ENCODE measurements at regions of chr9 and their contacts with region 1.

Region 1: DNA sequence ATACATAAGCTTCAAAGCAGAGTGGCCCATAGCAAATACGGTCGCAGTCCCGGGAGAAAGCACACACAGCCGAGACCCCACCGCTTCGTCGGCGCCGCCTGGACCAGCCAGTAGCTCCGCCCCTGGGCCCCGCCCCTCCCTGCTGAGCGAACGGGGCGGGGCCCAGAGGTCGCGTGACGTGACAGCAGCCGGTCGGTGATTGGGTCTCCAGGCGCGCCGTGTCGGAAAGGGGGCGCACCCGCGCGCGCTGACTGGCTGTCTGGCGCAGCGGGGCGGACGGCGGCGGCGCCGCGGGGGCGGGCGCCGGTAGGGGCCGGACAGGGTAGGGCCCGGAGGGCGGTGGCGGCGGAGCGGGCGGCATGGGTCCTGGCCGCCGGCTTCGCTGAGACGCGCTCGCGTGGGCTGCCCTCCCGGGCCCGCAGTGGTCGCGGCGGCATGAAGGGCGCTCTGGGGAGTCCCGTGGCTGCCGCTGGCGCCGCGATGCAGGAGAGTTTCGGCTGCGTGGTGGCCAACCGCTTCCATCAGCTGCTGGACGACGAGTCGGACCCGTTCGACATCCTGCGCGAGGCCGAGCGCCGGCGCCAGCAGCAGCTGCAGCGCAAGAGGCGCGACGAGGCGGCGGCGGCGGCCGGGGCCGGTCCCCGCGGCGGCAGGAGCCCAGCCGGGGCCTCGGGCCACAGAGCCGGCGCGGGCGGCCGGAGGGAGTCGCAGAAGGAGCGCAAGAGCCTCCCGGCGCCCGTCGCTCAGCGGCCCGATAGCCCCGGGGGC is at the start of gene HABP4:
- ATAC-seq: peak; percentile 96 to 98 (median 96)
- H3K4me3 ChIP-seq: peak within 1 kb of the TSS; percentile 49 to 70 (median 63)
- H3K27ac ChIP-seq: peak within 1 kb of the TSS; percentile 46 to 55
- H3K4me1 ChIP-seq: peaks cover 14 to 20% of the 10 kb centered on the region in 2 donors
- total RNA-seq, gene HABP4: 4.0 to 30.2 (median 24.0) TPM

Region 2: GRCh38 chr9:96532173-96532572 is 82.1 kb after region 1 on chr9:
- in situ Hi-C with region 1: no loop called
- ATAC-seq: no peak
- H3K4me3 ChIP-seq: no peak overlapping the region
- H3K27ac ChIP-seq: no peak overlapping the region
- H3K4me1 ChIP-seq: no peaks in the 10 kb centered on the region

Region 3: GRCh38 chr9:96599298-96599697 is 149.3 kb after region 1 on chr9:
- in situ Hi-C with region 1: loop called in 2 of 9 experiments (anchors 25 kb)
- ATAC-seq: no peak
- H3K4me3 ChIP-seq: no peak overlapping the region
- H3K27ac ChIP-seq: no peak overlapping the region
- H3K4me1 ChIP-seq: peaks cover 0 to 3% of the 10 kb centered on the region in 2 donors

Region 4: GRCh38 chr9:96619491-96620154 is 169.6 kb after region 1 on chr9 and contains the start of gene CDC14B:
- in situ Hi-C with region 1: loop called in 1 of 9 experiments (anchors 25 kb)
- ATAC-seq: peak; percentile 82 to 94 (median 88)
- H3K4me3 ChIP-seq: peak within 1 kb of the TSS; percentile 64 to 99 (median 92)
- H3K27ac ChIP-seq: peak within 1 kb of the TSS; percentile 45 to 66
- H3K4me1 ChIP-seq: peaks cover 19 to 22% of the 10 kb centered on the region in 2 donors
- total RNA-seq, gene CDC14B: 1.9 to 28.0 (median 14.5) TPM

Region 5: DNA sequence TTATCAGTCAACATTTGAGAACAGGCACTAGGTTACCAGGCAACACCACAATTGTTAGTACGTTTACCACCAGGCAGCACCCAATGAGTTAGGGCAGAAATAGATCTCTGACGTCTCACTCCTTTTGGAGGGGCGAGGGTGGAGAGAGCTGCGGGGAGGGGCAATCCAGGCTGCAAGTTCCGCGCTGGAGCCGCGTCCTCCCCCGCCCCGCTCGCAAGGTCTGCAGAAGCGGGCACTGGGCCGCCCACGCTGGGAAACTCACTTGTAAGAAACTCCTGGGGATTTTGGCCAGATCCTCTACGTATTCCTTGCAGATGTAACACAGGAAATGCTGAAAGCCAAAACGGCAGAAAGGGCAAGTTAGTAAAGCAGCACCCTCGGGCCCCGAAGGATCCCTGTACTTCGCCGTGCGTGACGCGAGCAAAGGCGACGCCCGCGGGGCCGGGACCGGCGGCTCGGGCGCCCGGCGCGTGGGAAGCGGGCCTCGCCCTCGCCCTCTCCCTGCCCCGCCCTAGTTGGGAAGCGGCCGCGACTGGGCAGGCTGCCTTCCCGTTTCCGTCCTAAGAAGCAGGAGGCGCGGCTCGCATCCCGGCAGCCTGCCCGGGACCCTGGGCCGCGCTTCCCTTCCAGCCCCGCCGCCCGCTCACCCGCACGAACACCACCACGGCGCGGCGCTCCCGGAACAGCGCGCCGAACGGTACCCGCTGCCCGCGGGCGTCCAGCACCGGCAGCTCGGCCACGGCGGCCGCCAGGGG is 204.6 kb after region 1 on chr9:
- in situ Hi-C with region 1: loop called in 2 of 9 experiments (anchors 25 kb)
- ATAC-seq: peak; percentile 71 to 82 (median 78)
- H3K4me3 ChIP-seq: peak overlapping the region; percentile 50 to 71 (median 60)
- H3K27ac ChIP-seq: peak overlapping the region; percentile 68 to 80
- H3K4me1 ChIP-seq: no peaks in the 10 kb centered on the region

Measured in motor neuron (in vitro differentiated cells).